ENCODE measurements at regions of chr4 and their contacts with region 1.

Region 1: GRCh38 chr4:86816501-86817273 is 32.5 kb downstream of the SLC10A6 start:
- DNase-seq: no peak
- H3K4me3 ChIP-seq: no peak overlapping the region
- H3K4me3 Mint-ChIP-seq: no peak overlapping the region
- H3K27ac ChIP-seq: no peak overlapping the region
- H3K27ac Mint-ChIP-seq: peak overlapping the region in 1 of 7 donors; percentile 73
- H3K4me1 ChIP-seq: no peaks in the 10 kb centered on the region
- H3K4me1 Mint-ChIP-seq: no peaks in the 10 kb centered on the region
- H3K27me3 ChIP-seq: no peaks in the 10 kb centered on the region
- H3K27me3 Mint-ChIP-seq: peaks cover 1% of the 10 kb centered on the region in 2 donors

Region 2: DNA sequence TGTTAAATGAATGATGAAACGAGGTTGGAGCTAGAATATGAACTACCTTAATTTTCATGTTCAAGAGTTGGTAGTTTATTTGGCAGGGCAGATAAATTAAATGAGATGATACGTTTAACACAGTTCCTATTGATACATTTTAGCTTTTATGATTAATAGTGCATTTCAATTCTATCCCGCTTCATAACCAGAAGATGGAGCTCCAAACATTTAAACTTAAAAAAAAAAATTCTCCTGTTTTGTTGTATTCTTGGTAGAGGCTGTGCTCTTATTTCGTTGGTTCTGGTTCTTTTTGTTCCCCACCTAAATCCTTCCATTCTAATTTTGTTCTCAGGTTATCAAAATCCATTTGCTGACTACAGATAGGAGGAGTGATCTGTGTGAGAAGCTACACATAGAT is 294.3 kb before region 1 on chr4:
- CTCF ChIA-PET with region 1: interaction called, 15 read pairs
- POLR2A ChIA-PET with region 1: no interaction called
- intact Hi-C with region 1: no loop called
- DNase-seq: peak in 4 of 5 donors; percentile 16 to 29 (median 18)
- H3K4me3 ChIP-seq: no peak overlapping the region
- H3K4me3 Mint-ChIP-seq: no peak overlapping the region
- H3K27ac ChIP-seq: no peak overlapping the region
- H3K27ac Mint-ChIP-seq: peak overlapping the region in 2 of 7 donors; percentile 16 to 43
- H3K4me1 ChIP-seq: no peaks in the 10 kb centered on the region
- H3K4me1 Mint-ChIP-seq: peaks cover 0 to 4% (median 0%) of the 10 kb centered on the region in 4 donors
- H3K27me3 ChIP-seq: no peaks in the 10 kb centered on the region
- H3K27me3 Mint-ChIP-seq: peaks cover 4 to 8% of the 10 kb centered on the region in 2 donors

Measured in CD4-positive, alpha-beta memory T cell (primary cell).